Naive thymus-derived CD4-positive, alpha-beta T cell (primary cell): ENCODE measurements at regions of chr20 and their contacts with region 1.

Region 1: DNA sequence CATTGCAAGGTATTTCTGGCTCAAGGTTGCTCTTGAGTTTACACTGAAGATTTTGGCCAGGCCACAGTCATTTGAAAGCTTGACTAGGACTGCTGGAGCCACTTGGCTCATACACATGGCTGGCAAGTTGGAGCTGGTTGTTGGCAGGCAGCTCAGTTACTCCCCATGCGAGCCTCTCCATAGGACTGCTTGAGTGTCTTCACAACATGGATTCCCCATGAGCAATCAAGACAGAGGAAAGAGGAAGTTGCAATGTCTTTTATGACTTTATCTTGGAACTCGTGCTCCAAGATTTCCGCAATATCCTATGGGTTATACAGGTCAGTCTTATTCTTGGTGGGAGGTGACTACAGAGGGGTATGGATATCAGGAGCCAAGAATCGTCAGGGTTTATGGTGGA is 1.4 kb upstream of the MANBAL start:
- DNase-seq: no peak
- ATAC-seq: no peak
- H3K4me3 ChIP-seq: no peak overlapping the region
- H3K4me3 Mint-ChIP-seq: peak overlapping the region; percentile 8 to 90 (median 64)
- H3K27ac ChIP-seq: no peak overlapping the region
- H3K27ac Mint-ChIP-seq: peak overlapping the region in 3 of 9 donors; percentile 10 to 96 (median 87)
- H3K4me1 ChIP-seq: peaks cover 10 to 13% of the 10 kb centered on the region in 2 donors
- H3K4me1 Mint-ChIP-seq: peaks cover 15 to 30% (median 24%) of the 10 kb centered on the region in 7 donors
- H3K27me3 ChIP-seq: no peaks in the 10 kb centered on the region
- H3K27me3 Mint-ChIP-seq: peaks cover 0 to 10% (median 6%) of the 10 kb centered on the region in 5 donors

Region 2: GRCh38 chr20:37345339-37346230 is 57.5 kb after region 1 on chr20 and contains the start of gene SRC:
- CTCF ChIA-PET with region 1: no interaction called
- POLR2A ChIA-PET with region 1: no interaction called
- intact Hi-C with region 1: loop called in 1 of 2 experiments (anchors 5 kb)
- DNase-seq: peak in 8 of 9 donors; percentile 20 to 60 (median 33)
- ATAC-seq: peak; percentile 62
- H3K4me3 ChIP-seq: peak within 1 kb of the TSS; percentile 55
- H3K4me3 Mint-ChIP-seq: peak within 1 kb of the TSS; percentile 44 to 81 (median 71)
- H3K27ac ChIP-seq: peak within 1 kb of the TSS; percentile 50
- H3K27ac Mint-ChIP-seq: peak within 1 kb of the TSS in 4 of 9 donors; percentile 9 to 45 (median 28)
- H3K4me1 ChIP-seq: peaks cover 0 to 5% of the 10 kb centered on the region in 2 donors
- H3K4me1 Mint-ChIP-seq: peaks cover 0 to 25% (median 13%) of the 10 kb centered on the region in 7 donors
- H3K27me3 ChIP-seq: no peaks in the 10 kb centered on the region
- H3K27me3 Mint-ChIP-seq: peaks cover 0 to 1% (median 0%) of the 10 kb centered on the region in 5 donors
- total RNA-seq, gene SRC: 2.8 to 26.6 (median 4.4) TPM